ENCODE measurements at regions of chr1 and their contacts with region 1.

Region 1: DNA sequence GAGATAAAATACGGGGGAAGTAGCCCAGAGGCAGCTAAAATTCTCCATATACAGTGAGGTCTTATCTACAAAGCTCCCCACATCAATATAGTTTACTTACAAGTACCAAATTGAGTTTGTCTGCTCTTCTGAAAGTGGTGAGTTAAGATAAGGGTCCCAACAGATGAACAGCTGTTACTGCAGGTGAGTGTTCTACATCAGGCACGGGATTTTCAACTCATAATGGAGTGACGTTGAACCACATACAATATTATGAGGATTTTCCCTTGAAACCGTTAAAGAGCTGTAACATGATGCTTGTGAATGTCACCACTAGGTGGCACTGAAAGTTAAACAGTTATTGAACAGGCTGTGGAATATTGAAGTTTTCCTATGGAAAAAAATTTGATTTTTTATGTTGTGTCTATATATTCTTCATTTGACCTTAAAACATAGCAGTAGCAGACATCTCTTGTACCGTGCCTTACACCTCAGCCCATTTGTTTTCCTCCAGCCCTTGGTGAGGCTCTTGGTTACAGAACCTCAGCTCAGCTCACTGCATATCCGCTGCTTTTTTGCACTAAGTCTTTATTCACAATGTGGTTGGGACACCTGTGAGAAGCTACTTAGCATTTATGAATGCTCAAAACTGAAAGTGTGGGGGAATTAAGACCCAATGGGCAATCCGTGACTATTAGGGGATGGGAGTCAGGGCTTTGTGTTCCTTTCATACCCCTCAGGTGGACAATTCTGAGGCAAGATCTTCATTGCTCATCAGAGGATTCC is 23.2 kb downstream of the CD1D start:
- H3K4me3 Mint-ChIP-seq: peak overlapping the region; percentile 55
- H3K27ac Mint-ChIP-seq: peak overlapping the region; percentile 56
- H3K4me1 Mint-ChIP-seq: peaks cover 43% of the 10 kb centered on the region
- H3K27me3 Mint-ChIP-seq: peaks cover 3% of the 10 kb centered on the region

Region 2: GRCh38 chr1:158248118-158248517 is 44.2 kb after region 1 on chr1:
- intact Hi-C with region 1: loop called (anchors 10 kb)
- H3K4me3 Mint-ChIP-seq: peak overlapping the region; percentile 4
- H3K27ac Mint-ChIP-seq: peak overlapping the region; percentile 88
- H3K4me1 Mint-ChIP-seq: peaks cover 69% of the 10 kb centered on the region
- H3K27me3 Mint-ChIP-seq: peaks cover 11% of the 10 kb centered on the region

Region 3: DNA sequence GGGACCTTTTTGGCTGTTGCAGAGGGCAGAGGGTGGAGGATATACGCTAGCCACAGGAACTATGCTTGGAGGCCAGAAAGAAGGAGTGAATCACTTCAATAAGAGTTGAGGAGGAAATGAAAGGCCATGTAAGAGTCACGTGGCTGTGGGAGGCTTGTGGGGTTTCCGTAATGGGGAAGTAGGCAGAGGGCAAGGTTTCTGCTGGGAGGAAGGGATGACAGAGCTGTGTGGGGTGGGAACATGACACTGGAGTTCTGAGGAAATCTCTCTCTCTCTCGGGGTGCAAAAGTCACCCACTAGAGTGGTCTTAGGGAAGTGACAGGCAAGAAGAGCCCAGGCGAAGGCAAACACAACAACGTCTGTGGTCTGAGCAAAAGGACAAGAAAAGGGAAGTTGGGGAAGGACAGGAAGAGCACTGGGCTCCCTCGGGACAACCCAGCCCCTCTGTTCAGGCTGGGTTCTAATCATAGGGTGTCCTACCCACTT is 81.9 kb after region 1 on chr1:
- intact Hi-C with region 1: loop called (anchors 10 kb)
- H3K4me3 Mint-ChIP-seq: peak overlapping the region; percentile 33
- H3K27ac Mint-ChIP-seq: peak overlapping the region; percentile 93
- H3K4me1 Mint-ChIP-seq: peaks cover 59% of the 10 kb centered on the region
- H3K27me3 Mint-ChIP-seq: no peaks in the 10 kb centered on the region

Region 4: GRCh38 chr1:158329733-158330132 is 125.9 kb after region 1 on chr1:
- intact Hi-C with region 1: loop called (anchors 2 kb)
- H3K4me3 Mint-ChIP-seq: no peak overlapping the region
- H3K27ac Mint-ChIP-seq: no peak overlapping the region
- H3K4me1 Mint-ChIP-seq: peaks cover 22% of the 10 kb centered on the region
- H3K27me3 Mint-ChIP-seq: no peaks in the 10 kb centered on the region

Region 5: GRCh38 chr1:158391099-158391498 is 187.2 kb after region 1 on chr1:
- intact Hi-C with region 1: no loop called
- H3K4me3 Mint-ChIP-seq: no peak overlapping the region
- H3K27ac Mint-ChIP-seq: no peak overlapping the region
- H3K4me1 Mint-ChIP-seq: peaks cover 5% of the 10 kb centered on the region
- H3K27me3 Mint-ChIP-seq: no peaks in the 10 kb centered on the region

Region 6: DNA sequence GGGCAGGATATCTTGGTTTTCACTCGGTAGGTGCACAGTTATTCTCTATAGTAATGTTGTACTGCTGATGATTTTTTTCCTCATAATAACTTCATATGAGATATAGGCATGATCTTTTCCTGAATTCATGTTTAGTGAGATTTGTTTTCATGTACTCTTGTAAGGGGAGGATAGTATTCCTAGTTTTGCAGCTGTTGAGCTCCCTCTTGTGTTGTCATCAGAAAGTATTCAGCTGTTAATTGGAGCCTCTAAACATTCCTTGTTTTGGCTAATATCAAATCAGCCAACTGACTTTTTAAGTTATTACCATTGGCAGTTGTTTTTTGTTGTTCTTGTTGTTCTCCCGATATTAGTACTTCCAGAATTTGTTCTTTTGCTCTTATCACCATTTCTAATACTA is 292.5 kb after region 1 on chr1:
- intact Hi-C with region 1: loop called (anchors 1 kb)
- H3K4me3 Mint-ChIP-seq: no peak overlapping the region
- H3K27ac Mint-ChIP-seq: no peak overlapping the region
- H3K4me1 Mint-ChIP-seq: peaks cover 12% of the 10 kb centered on the region
- H3K27me3 Mint-ChIP-seq: peaks cover 4% of the 10 kb centered on the region

Region 7: GRCh38 chr1:159009704-159010361 is 806.0 kb after region 1 on chr1 and contains the start of gene IFI16:
- intact Hi-C with region 1: loop called (anchors 5 kb)
- H3K4me3 Mint-ChIP-seq: peak within 1 kb of the TSS; percentile 83
- H3K27ac Mint-ChIP-seq: peak within 1 kb of the TSS; percentile 95
- H3K4me1 Mint-ChIP-seq: peaks cover 68% of the 10 kb centered on the region
- H3K27me3 Mint-ChIP-seq: no peaks in the 10 kb centered on the region

Measured in dendritic cell treated with granulocyte-macrophage colony-stimulating factor and Interleukin-4, amounts not matched to agents 40 ng/mL and 50 ng/mL, for 4 days (primary cell).